Posterior vena cava (tissue), 2 donors: ENCODE measurements at regions of chr13 and their contacts with region 1.

Region 1: GRCh38 chr13:112643759-112644459 is 45.9 kb upstream of the ATP11A start:
- DNase-seq: no peak

Region 2: GRCh38 chr13:112873851-112874750 is 230.2 kb after region 1 on chr13:
- intact Hi-C with region 1: loop called (anchors 10 kb)
- DNase-seq: peak; percentile 95